ENCODE measurements at regions of chr2 and their contacts with region 1.

Region 1: GRCh38 chr2:197168705-197169104 is 141.9 kb downstream of the ANKRD44 start:
- DNase-seq: peak; percentile 82
- ATAC-seq: peak; percentile 76
- H3K4me3 ChIP-seq: no peak overlapping the region
- H3K4me3 Mint-ChIP-seq: peak overlapping the region; percentile 4
- H3K27ac ChIP-seq: peak overlapping the region; percentile 2 to 60
- H3K27ac Mint-ChIP-seq: peak overlapping the region; percentile 64
- H3K4me1 ChIP-seq: peaks cover 61 to 64% of the 10 kb centered on the region in 2 donors
- H3K4me1 Mint-ChIP-seq: peaks cover 78% of the 10 kb centered on the region
- H3K27me3 ChIP-seq: no peaks in the 10 kb centered on the region
- H3K27me3 Mint-ChIP-seq: no peaks in the 10 kb centered on the region
- CTCF ChIP-seq: peak; percentile 79

Region 2: GRCh38 chr2:197121255-197121654 is 47.5 kb before region 1 on chr2:
- CTCF ChIA-PET with region 1: interaction called, 328 read pairs
- POLR2A ChIA-PET with region 1: interaction called, 3 read pairs
- intact Hi-C with region 1: no loop called
- DNase-seq: no peak
- ATAC-seq: no peak
- H3K4me3 ChIP-seq: no peak overlapping the region
- H3K4me3 Mint-ChIP-seq: no peak overlapping the region
- H3K27ac ChIP-seq: peak overlapping the region in 1 of 2 donors; percentile 16
- H3K27ac Mint-ChIP-seq: peak overlapping the region; percentile 8
- H3K4me1 ChIP-seq: peaks cover 10% of the 10 kb centered on the region in 2 donors
- H3K4me1 Mint-ChIP-seq: peaks cover 38% of the 10 kb centered on the region
- H3K27me3 ChIP-seq: no peaks in the 10 kb centered on the region
- H3K27me3 Mint-ChIP-seq: no peaks in the 10 kb centered on the region
- CTCF ChIP-seq: no peak

Region 3: DNA sequence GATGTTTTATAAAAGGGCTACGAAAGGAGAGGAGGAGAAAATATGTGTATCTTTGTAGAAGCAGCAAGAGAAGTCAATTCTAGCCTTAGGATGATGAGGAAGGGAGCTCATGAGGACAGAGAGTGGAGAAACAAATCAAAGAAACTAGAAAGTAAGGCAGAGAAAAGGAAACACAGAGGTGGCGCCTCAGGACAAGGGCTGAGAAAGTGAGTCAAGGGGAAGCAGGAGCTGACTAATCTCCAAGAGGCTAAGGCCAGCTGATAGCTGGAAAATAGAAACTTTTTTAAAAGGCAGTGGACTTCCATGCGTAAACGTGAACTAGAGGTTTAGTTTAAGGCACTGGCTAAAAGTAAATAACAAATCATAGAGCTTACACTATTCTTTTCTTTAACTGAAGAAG is 31.5 kb before region 1 on chr2:
- CTCF ChIA-PET with region 1: interaction called, 11 read pairs
- POLR2A ChIA-PET with region 1: no interaction called
- intact Hi-C with region 1: loop called (anchors 5 kb)
- DNase-seq: no peak
- ATAC-seq: no peak
- H3K4me3 ChIP-seq: no peak overlapping the region
- H3K4me3 Mint-ChIP-seq: peak overlapping the region; percentile 32
- H3K27ac ChIP-seq: peak overlapping the region; percentile 31 to 82
- H3K27ac Mint-ChIP-seq: peak overlapping the region; percentile 89
- H3K4me1 ChIP-seq: peaks cover 83 to 85% of the 10 kb centered on the region in 2 donors
- H3K4me1 Mint-ChIP-seq: peaks cover 85% of the 10 kb centered on the region
- H3K27me3 ChIP-seq: no peaks in the 10 kb centered on the region
- H3K27me3 Mint-ChIP-seq: no peaks in the 10 kb centered on the region
- CTCF ChIP-seq: no peak

Region 4: DNA sequence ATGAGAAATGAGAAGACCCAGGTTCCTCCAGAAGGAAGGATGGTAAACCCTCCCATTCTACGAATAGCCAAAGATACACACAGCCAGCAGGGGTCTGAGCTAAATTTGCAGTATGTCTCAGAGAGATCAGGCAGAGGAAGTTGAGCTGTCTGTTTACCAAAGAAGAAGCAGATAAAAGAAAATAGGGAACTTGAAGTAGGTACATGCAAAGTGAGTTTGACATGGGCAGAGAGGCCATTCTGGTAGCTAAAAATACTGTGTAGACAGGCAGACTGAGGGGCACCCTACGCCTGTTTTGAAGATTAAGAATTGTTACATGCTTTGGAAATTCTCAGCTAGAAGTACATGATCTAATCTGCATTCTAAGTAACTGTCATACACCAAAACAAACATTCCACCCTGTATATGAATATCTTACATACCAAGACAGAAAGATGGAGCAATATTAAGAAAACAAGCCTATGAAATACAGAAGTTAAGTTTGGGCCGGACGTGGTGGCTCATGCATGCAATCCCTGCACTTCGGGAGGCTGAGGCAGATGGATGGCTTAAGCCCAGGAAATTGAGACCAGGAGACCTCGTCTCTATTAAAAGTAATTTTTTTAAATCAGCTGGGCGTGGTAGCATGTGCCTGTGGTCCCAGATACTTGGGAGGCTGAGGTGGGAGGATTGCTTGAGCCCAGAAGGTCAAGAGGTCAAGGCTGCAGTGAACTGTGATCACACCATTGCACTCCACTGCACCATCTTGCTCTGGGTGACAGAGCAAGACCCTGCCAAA is 16.1 kb before region 1 on chr2:
- CTCF ChIA-PET with region 1: interaction called, 42 read pairs
- POLR2A ChIA-PET with region 1: no interaction called
- intact Hi-C with region 1: loop called (anchors 2 kb)
- DNase-seq: peak; percentile 89
- ATAC-seq: peak; percentile 87
- H3K4me3 ChIP-seq: peak overlapping the region; percentile 4 to 40 (median 29)
- H3K4me3 Mint-ChIP-seq: peak overlapping the region; percentile 74
- H3K27ac ChIP-seq: peak overlapping the region; percentile 93
- H3K27ac Mint-ChIP-seq: peak overlapping the region; percentile 90
- H3K4me1 ChIP-seq: peaks cover 81 to 88% of the 10 kb centered on the region in 2 donors
- H3K4me1 Mint-ChIP-seq: peaks cover 79% of the 10 kb centered on the region
- H3K27me3 ChIP-seq: no peaks in the 10 kb centered on the region
- H3K27me3 Mint-ChIP-seq: no peaks in the 10 kb centered on the region
- CTCF ChIP-seq: peak; percentile 69

Region 5: GRCh38 chr2:197191177-197191939 is 22.7 kb after region 1 on chr2:
- CTCF ChIA-PET with region 1: interaction called, 17 read pairs
- POLR2A ChIA-PET with region 1: no interaction called
- intact Hi-C with region 1: no loop called
- DNase-seq: peak; percentile 83
- ATAC-seq: peak; percentile 75
- H3K4me3 ChIP-seq: no peak overlapping the region
- H3K4me3 Mint-ChIP-seq: peak overlapping the region; percentile 2
- H3K27ac ChIP-seq: peak overlapping the region; percentile 27 to 62
- H3K27ac Mint-ChIP-seq: peak overlapping the region; percentile 80
- H3K4me1 ChIP-seq: peaks cover 47 to 53% of the 10 kb centered on the region in 2 donors
- H3K4me1 Mint-ChIP-seq: peaks cover 78% of the 10 kb centered on the region
- H3K27me3 ChIP-seq: no peaks in the 10 kb centered on the region
- H3K27me3 Mint-ChIP-seq: no peaks in the 10 kb centered on the region
- CTCF ChIP-seq: peak; percentile 85

Measured in B cell (primary cell).